Activated naive CD4-positive, alpha-beta T cell treated with anti-CD3 and anti-CD28 coated beads for 36 hours (primary cell): ENCODE measurements at regions of chr11 and their contacts with region 1.

Region 1: GRCh38 chr11:118488480-118489109 is 38.7 kb upstream of the TTC36 start:
- DNase-seq: peak; percentile 92
- H3K4me3 Mint-ChIP-seq: no peak overlapping the region
- H3K27ac Mint-ChIP-seq: no peak overlapping the region
- H3K4me1 Mint-ChIP-seq: peaks cover 9% of the 10 kb centered on the region
- H3K27me3 Mint-ChIP-seq: no peaks in the 10 kb centered on the region

Region 2: DNA sequence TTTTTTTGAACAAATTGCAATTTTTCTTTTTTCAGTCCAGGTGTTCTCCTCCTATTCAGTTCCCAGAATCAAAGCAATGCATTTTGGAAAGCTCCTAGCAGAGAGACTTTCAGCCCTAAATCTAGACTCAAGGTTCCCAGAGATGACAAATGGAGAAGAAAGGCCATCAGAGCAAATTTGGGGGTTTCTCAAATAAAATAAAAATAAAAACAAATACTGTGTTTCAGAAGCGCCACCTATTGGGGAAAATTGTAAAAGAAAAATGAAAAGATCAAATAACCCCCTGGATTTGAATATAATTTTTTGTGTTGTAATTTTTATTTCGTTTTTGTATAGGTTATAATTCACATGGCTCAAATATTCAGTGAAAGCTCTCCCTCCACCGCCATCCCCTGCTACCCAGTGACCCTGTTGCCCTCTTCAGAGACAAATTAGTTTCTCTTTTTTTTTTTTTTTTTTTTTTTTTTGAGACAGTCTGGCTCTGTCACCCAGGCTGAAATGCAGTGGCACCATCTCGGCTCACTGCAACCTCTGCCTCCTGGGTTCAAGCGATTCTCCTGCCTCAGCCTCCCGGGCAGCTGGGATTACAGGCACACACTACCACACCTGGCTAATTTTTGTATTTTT is 135.4 kb before region 1 on chr11:
- CTCF ChIA-PET with region 1: no interaction called
- intact Hi-C with region 1: loop called (anchors 2 kb)
- DNase-seq: no peak
- H3K4me3 Mint-ChIP-seq: no peak overlapping the region
- H3K27ac Mint-ChIP-seq: peak overlapping the region; percentile 80
- H3K4me1 Mint-ChIP-seq: peaks cover 24% of the 10 kb centered on the region
- H3K27me3 Mint-ChIP-seq: no peaks in the 10 kb centered on the region